K562 (cell line): ENCODE measurements at regions of chr6 and their contacts with region 1.

Region 1: DNA sequence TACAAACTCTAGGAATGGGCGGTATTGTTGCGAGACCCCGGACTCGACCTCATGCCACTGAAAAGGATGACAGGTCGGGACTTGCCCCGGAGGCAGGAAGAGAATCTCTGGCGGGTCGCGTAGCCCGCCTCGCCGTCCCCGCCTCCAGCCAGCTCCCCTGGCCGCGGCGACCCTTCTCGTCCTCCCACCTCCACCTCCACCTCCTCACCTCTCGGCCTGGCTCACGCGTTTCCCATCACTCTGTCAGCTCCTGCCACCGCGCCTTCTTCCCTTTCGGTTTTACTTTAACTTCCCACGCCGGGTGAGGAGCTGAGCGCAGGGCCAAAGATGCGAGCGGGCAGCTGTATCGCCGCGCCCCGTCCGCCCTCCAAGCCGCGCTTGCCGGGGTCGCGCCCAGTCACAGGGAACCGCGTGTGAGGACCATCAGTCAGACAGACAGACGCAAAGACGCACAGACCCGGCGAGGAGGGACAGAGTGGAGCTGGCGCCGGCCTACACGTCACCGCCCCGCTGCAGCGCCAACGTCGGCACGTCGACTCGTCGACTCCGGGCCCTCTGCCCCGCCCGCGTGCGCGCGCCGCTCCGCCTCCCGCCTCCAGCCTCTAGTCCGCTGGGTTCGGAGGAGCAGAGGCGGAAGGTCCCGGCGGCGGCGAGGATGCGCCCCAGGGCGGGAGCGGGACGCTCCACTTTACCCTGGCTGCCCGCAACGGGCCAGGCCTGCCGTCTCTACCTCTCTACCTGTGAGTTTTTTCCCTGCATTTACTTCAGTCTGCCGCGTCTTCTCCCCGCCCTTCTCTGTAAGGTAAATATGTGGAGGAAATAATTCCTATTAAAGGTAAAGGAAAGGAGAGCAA is at the start of gene ASCC3:
- DNase-seq: peak; percentile 83 to 96 (median 88)
- ATAC-seq: peak; percentile 97
- H3K4me3 ChIP-seq: peak within 1 kb of the TSS; percentile 80
- H3K27ac ChIP-seq: peak within 1 kb of the TSS; percentile 84
- H3K4me1 ChIP-seq: peaks cover 7 to 28% of the 10 kb centered on the region in 2 experiments; a peak in 3 of 5 replicates
- H3K27me3 ChIP-seq: no peaks in the 10 kb centered on the region
- CTCF ChIP-seq: no peak
- EP300 ChIP-seq: 0 out of 2 replicates have a peak, but pooled peaks have one; percentile 12
- POLR2A ChIP-seq: peak; percentile 93
- RAD21 ChIP-seq: no peak
- polyA plus RNA-seq, gene ASCC3: 16.1 to 18.2 TPM

Region 2: DNA sequence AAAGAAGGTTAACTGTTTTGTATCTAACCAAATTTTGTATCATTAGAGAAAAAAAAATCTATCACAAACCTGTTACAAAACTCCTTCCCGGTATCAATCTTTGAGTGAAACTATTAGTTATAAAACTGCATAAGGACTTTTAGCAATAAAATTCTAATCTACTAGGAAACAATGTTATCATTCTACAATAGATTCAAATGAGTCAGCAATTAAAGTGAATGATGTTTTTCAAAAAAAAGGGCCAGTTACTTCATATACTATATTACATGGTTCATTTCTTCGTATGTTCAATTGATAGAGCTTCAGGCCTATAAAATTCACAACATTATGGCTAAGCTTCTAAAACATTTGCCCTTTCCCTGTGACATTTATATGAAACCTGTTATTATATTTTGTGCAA is 15.6 kb before region 1 on chr6:
- CTCF ChIA-PET with region 1: no interaction called
- POLR2A ChIA-PET with region 1: interaction called, 10 read pairs
- in situ Hi-C with region 1: no loop called
- intact Hi-C with region 1: no loop called
- DNase-seq: no peak
- ATAC-seq: no peak
- H3K4me3 ChIP-seq: no peak overlapping the region
- H3K27ac ChIP-seq: no peak overlapping the region
- H3K4me1 ChIP-seq: no peaks in the 10 kb centered on the region; a peak in 2 of 5 replicates
- H3K27me3 ChIP-seq: no peaks in the 10 kb centered on the region
- CTCF ChIP-seq: no peak
- EP300 ChIP-seq: no peak
- POLR2A ChIP-seq: no peak
- RAD21 ChIP-seq: no peak